Heart right ventricle (tissue), 16 donors: ENCODE measurements at regions of chr3 and their contacts with region 1.

Region 1: DNA sequence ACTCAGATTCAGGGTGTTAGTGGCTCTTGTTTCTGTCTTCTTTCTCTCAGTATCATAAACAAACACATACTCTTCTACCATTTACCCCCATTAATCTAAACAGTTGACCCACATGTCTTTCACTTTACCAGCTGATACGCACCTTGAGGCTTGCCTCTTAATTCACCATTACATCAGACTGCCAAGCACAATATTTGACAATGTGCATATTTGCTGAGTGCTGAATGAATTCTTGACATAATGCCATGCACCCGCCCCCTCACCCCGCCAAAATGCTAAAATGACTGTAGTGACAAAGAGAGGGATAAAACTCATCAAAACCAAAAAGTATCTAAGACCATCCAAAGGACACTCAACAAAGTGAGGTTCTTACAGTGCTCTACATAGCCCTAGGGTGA is 57.4 kb downstream of the NGLY1 start:
- DNase-seq: no peak
- ATAC-seq: no peak
- H3K4me3 ChIP-seq: no peak overlapping the region
- H3K27ac ChIP-seq: no peak overlapping the region
- H3K4me1 ChIP-seq: no peaks in the 10 kb centered on the region
- H3K27me3 ChIP-seq: no peaks in the 10 kb centered on the region
- CTCF ChIP-seq: no peak

Region 2: GRCh38 chr3:25633919-25634318 is 91.9 kb before region 1 on chr3:
- intact Hi-C with region 1: loop called in 1 of 10 experiments (anchors 10 kb)
- DNase-seq: no peak
- ATAC-seq: no peak
- H3K4me3 ChIP-seq: no peak overlapping the region
- H3K27ac ChIP-seq: no peak overlapping the region
- H3K4me1 ChIP-seq: no peaks in the 10 kb centered on the region
- H3K27me3 ChIP-seq: no peaks in the 10 kb centered on the region
- CTCF ChIP-seq: no peak